A549 (cell line): ENCODE measurements at regions of chr5 and their contacts with region 1.

Region 1: GRCh38 chr5:57524298-57525060 is 41.9 kb upstream of the ACTBL2 start:
- DNase-seq: no peak
- ATAC-seq: no peak
- H3K4me3 ChIP-seq: no peak overlapping the region
- H3K27ac ChIP-seq: no peak overlapping the region
- H3K4me1 ChIP-seq: no peaks in the 10 kb centered on the region
- CTCF ChIP-seq: no peak
- EP300 ChIP-seq: no peak
- POLR2A ChIP-seq: no peak
- RAD21 ChIP-seq: no peak

Region 2: DNA sequence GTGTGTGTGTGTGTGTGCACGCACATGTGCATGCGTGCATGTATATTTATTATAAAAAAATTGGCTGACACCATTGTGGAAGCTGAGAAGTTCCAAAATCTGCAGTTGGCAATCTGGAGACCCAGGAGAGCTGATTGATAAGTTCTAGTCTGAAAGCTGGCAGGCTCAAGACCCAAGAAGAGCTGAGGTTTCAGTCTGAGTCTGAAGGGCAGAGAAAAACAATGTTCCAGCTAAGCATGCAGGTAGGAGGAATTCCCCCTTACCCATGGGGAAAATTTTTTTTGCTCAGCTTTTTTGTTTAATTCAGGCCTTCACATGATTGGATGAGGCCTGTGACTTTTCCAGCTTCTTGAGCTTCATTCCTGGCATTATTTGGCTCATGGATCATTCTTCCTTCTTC is 10.7 kb before region 1 on chr5:
- CTCF ChIA-PET with region 1: interaction called, 10 read pairs
- POLR2A ChIA-PET with region 1: no interaction called
- DNase-seq: no peak
- ATAC-seq: no peak
- H3K4me3 ChIP-seq: no peak overlapping the region
- H3K27ac ChIP-seq: no peak overlapping the region
- H3K4me1 ChIP-seq: no peaks in the 10 kb centered on the region
- CTCF ChIP-seq: no peak
- EP300 ChIP-seq: no peak
- POLR2A ChIP-seq: no peak
- RAD21 ChIP-seq: no peak

Region 3: DNA sequence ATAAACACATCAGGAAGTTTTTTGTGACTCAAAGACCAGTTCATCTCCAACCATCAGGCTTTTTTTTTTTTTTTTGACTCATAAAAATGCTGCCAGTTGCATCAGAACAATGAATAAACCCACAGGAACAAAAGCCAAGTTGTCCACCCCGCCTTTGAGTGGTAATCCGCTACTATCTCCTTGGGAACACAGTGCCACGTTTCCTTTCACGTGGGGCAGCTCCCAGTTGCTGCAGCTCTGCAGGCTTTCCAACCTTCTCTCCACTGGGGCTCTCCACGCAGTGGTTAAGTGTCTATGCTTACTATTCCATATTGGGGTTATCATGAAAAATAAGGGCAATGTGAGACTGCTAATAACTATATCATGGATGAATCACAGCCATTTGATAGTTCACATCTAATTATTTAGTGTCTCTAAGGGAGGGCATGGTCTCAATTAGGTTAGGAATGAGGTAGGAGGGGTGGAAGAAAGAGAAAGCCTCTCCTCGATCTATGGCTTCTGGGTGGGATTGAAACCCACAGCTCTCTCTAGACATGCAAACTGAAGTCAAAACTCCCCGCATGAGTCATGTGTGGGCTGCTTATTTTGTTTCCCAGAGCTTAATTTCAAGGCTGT is 14.0 kb after region 1 on chr5:
- CTCF ChIA-PET with region 1: no interaction called
- POLR2A ChIA-PET with region 1: no interaction called
- DNase-seq: peak in 1 of 2 experiments; percentile 16
- ATAC-seq: no peak
- H3K4me3 ChIP-seq: no peak overlapping the region
- H3K27ac ChIP-seq: no peak overlapping the region
- H3K4me1 ChIP-seq: 0 out of 3 replicates have a peak, but pooled peaks cover 3% of the 10 kb centered on the region
- CTCF ChIP-seq: no peak
- EP300 ChIP-seq: no peak
- POLR2A ChIP-seq: no peak
- RAD21 ChIP-seq: no peak